ENCODE measurements at regions of chr5 and their contacts with region 1.

Region 1: DNA sequence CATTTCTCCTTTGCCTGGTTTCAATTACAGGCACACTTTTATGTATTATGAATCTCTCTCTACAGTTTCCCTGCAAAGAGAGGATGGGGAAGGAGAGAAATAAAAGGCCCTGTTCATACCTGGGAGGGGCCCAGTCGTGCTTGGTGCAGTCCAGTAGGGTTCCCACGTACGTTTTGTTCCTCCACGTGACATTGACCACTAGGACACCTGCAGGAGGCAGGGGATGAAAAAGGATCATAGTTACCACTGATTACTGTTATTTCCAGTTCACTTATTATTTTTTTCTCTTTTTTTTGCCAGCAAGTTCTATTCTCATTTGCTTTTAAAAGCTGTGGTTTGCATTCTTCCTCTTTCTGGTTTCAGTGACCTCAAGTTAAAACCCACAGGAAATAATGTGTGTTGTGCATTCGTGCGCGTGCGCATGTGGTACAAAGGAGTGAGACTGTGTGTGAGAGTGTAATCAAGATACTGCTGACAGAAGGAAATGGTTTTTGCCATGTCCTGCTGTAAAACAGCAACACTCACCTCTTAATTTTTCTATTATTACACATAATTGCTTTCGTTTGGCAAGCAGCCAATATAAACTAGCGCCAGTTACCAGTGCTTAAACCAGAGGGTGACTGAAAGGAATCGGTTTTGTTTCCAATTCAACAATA is 96.8 kb downstream of the ZNF608 start:
- DNase-seq: peak; percentile 73
- H3K4me3 Mint-ChIP-seq: peak overlapping the region; percentile 41
- H3K27ac Mint-ChIP-seq: peak overlapping the region; percentile 61
- H3K4me1 Mint-ChIP-seq: peaks cover 49% of the 10 kb centered on the region
- H3K27me3 Mint-ChIP-seq: no peaks in the 10 kb centered on the region
- CTCF ChIP-seq: no peak

Region 2: DNA sequence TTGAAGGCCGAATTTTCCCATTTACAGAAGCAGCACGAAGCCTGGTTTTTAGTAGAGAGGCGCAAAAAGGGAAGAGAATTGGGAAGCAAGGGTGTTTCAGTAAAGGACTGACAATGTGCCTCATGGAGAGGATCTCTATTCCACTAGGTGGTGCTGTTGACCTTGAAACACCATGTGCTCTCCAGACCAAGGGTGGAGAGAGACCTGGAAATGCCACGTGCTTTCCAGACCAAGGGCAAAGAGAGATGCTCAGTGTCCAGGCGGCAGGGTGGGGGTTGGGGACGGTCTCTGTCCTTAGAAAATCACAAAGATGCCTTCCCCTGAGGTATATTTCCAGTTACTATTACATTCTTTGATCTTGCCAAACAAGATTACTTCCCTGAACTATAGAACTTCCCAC is 712.4 kb before region 1 on chr5:
- CTCF ChIA-PET with region 1: no interaction called
- POLR2A ChIA-PET with region 1: no interaction called
- intact Hi-C with region 1: loop called (anchors 10 kb)
- DNase-seq: peak; percentile 85
- H3K4me3 Mint-ChIP-seq: no peak overlapping the region
- H3K27ac Mint-ChIP-seq: no peak overlapping the region
- H3K4me1 Mint-ChIP-seq: peaks cover 7% of the 10 kb centered on the region
- H3K27me3 Mint-ChIP-seq: no peaks in the 10 kb centered on the region
- CTCF ChIP-seq: peak; percentile 86

Region 3: GRCh38 chr5:124661317-124662141 is 11.9 kb after region 1 on chr5:
- CTCF ChIA-PET with region 1: interaction called, 5 read pairs
- POLR2A ChIA-PET with region 1: interaction called, 10 read pairs
- intact Hi-C with region 1: no loop called
- DNase-seq: peak; percentile 66
- H3K4me3 Mint-ChIP-seq: peak overlapping the region; percentile 47
- H3K27ac Mint-ChIP-seq: peak overlapping the region; percentile 95
- H3K4me1 Mint-ChIP-seq: peaks cover 48% of the 10 kb centered on the region
- H3K27me3 Mint-ChIP-seq: no peaks in the 10 kb centered on the region
- CTCF ChIP-seq: no peak

Region 4: GRCh38 chr5:126124706-126125345 is 1475.2 kb after region 1 on chr5:
- CTCF ChIA-PET with region 1: no interaction called
- POLR2A ChIA-PET with region 1: no interaction called
- intact Hi-C with region 1: loop called (anchors 10 kb)
- DNase-seq: peak; percentile 92
- H3K4me3 Mint-ChIP-seq: peak overlapping the region; percentile 30
- H3K27ac Mint-ChIP-seq: peak overlapping the region; percentile 71
- H3K4me1 Mint-ChIP-seq: peaks cover 46% of the 10 kb centered on the region
- H3K27me3 Mint-ChIP-seq: no peaks in the 10 kb centered on the region
- CTCF ChIP-seq: no peak